Activated CD8-positive, alpha-beta T cell treated with anti-CD3 and anti-CD28 coated beads, Interleukin-2, amount 10 ng/mL, durations not matched to agents 7 days and 5 days (primary cell): ENCODE measurements at regions of chr16 and their contacts with region 1.

Region 1: DNA sequence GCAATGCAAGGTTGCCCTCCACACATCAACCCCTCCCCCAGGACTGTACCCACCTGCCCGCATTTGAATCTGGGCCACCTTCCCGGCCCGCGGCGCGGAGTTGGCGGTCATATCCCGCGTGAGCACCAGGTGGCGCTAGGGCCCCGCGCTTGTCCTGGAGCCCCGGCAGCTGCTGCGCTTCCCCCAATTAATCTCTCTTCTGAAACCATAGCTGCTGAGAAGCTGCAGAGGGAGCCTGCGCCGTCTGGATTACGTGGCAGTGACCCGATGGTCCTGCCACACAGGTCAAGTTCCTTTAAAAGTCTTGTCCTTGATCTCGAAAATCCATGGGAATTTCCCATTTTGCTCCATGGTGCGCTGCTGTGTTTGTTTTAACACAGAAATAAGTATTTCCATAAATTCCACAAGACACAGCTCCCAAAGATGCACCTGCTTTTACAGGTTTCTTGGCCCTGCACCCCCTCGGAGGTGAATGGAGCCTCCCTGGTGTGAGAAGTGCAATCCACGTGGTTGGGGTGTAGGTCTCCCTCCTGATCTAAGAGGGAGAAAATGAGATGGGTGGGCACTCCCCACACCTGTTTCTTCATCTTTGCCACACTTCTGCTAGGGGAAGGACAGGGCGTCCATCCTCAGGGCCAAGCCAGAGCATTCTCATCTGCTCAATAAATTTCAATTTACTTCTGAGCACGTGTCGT is 22.1 kb downstream of the COX4I1 start:
- DNase-seq: peak; percentile 84
- ATAC-seq: peak; percentile 83
- H3K4me3 Mint-ChIP-seq: no peak overlapping the region
- H3K27ac Mint-ChIP-seq: no peak overlapping the region
- H3K4me1 Mint-ChIP-seq: peaks cover 9% of the 10 kb centered on the region
- H3K27me3 Mint-ChIP-seq: peaks cover 3% of the 10 kb centered on the region

Region 2: GRCh38 chr16:85396879-85397871 is 424.4 kb before region 1 on chr16:
- CTCF ChIA-PET with region 1: no interaction called
- POLR2A ChIA-PET with region 1: no interaction called
- DNase-seq: no peak
- ATAC-seq: no peak
- H3K4me3 Mint-ChIP-seq: no peak overlapping the region
- H3K27ac Mint-ChIP-seq: no peak overlapping the region
- H3K4me1 Mint-ChIP-seq: peaks cover 2% of the 10 kb centered on the region
- H3K27me3 Mint-ChIP-seq: no peaks in the 10 kb centered on the region

Region 3: DNA sequence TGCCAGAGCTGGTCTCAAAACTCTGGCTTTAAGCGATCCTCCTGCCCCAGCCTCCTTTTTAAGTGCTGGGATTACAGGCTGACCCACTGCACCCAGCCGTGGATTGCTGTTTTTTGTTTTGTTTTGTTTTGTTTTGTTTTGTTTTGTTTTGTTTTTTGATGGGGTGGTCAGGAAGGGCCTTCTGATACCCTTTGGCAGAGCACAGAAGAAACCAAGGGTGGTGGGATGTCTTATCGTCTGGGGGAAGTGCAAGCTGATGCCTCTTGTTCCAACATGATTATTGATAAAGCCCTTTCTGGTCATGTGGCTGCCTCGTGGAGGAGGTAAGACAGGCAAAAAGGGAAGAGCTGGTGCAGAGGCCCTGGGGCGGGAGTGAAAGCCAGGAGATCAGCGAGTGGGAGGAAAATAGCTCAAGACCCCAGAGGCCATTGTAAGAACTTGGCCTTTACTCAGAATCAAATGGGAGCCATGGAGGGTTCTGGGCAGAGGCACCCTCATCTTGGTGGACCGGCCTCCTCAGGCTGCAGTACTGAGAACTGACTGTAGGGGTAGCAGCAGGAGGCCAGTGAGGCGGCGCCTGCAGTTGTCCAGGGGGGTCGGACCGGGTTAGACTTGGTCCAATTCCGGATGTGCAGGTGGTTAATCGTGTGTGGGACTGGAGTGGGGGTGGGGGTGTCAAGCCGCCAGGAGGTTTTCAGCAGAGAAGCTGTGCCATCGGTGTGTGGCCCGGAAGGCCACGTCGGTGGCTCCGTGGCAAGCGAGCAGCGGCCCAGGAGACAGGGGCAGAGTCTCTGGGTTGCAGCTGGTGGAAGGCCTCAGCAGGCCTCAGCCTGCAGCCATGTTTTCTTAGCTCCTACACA is 292.8 kb before region 1 on chr16:
- CTCF ChIA-PET with region 1: no interaction called
- POLR2A ChIA-PET with region 1: no interaction called
- DNase-seq: peak; percentile 32
- ATAC-seq: no peak
- H3K4me3 Mint-ChIP-seq: no peak overlapping the region
- H3K27ac Mint-ChIP-seq: no peak overlapping the region
- H3K4me1 Mint-ChIP-seq: no peaks in the 10 kb centered on the region
- H3K27me3 Mint-ChIP-seq: no peaks in the 10 kb centered on the region

Region 4: GRCh38 chr16:85799497-85800337 is 21.9 kb before region 1 on chr16 and contains the starts of genes COX4I1 and EMC8:
- CTCF ChIA-PET with region 1: interaction called, 19 read pairs
- POLR2A ChIA-PET with region 1: no interaction called
- DNase-seq: peak; percentile 95
- ATAC-seq: peak; percentile 91
- H3K4me3 Mint-ChIP-seq: peak within 1 kb of the TSS; percentile 90
- H3K27ac Mint-ChIP-seq: peak within 1 kb of the TSS; percentile 89
- H3K4me1 Mint-ChIP-seq: peaks cover 61% of the 10 kb centered on the region
- H3K27me3 Mint-ChIP-seq: no peaks in the 10 kb centered on the region
- total RNA-seq, gene COX4I1: 505 to 520 TPM
- total RNA-seq, gene EMC8: 33.3 to 43.0 TPM

Region 5: GRCh38 chr16:85898521-85899442 is 77.2 kb after region 1 on chr16 and contains the start of gene IRF8:
- CTCF ChIA-PET with region 1: interaction called, 69 read pairs
- POLR2A ChIA-PET with region 1: interaction called, 4 read pairs
- DNase-seq: peak; percentile 84
- ATAC-seq: peak; percentile 85
- H3K4me3 Mint-ChIP-seq: peak within 1 kb of the TSS; percentile 88
- H3K27ac Mint-ChIP-seq: peak within 1 kb of the TSS; percentile 76
- H3K4me1 Mint-ChIP-seq: peaks cover 50% of the 10 kb centered on the region
- H3K27me3 Mint-ChIP-seq: peaks cover 8% of the 10 kb centered on the region
- total RNA-seq, gene IRF8: 22.9 to 24.0 TPM

Region 6: DNA sequence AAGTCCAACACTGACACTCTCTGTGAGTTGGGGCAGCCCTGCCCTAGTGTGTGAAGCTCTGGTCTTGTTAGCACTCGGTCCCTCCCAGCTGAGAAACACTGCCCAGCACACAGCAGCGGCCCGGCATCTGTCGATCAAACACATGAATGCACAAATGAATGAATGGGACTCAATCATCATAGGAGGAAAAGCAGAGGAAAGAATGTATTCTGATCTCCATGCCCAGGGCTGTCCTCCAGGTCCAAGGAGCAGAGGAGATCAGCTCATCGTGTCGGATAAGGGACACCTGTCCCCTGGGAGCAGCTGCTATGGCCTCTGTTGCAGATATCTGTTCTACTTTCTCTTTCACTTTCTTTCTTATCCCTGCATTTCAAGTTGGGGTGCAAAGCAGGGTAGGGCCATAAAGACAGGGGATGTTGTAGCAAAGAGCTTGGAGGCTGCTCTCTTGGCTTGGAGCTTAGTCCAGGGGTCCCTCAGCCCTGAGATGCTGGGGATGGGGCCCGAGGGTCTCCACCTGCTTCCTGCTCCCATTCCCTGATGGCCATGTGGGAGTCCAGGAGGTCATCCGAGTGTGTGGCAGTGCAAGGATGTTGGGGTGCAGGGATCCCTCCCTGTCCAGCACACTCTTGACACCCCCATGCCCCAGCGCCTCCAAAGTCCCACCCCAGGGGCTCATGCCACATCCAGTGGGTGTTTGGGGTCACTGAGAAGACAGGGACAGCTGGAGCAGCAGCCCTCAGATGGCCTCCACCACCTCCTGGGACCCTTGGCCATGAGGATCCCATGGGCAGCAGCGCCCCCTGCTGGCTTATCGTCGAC is 165.6 kb after region 1 on chr16:
- CTCF ChIA-PET with region 1: interaction called, 385 read pairs
- POLR2A ChIA-PET with region 1: interaction called, 14 read pairs
- DNase-seq: peak; percentile 50
- ATAC-seq: peak; percentile 51
- H3K4me3 Mint-ChIP-seq: no peak overlapping the region
- H3K27ac Mint-ChIP-seq: peak overlapping the region; percentile 69
- H3K4me1 Mint-ChIP-seq: peaks cover 55% of the 10 kb centered on the region
- H3K27me3 Mint-ChIP-seq: no peaks in the 10 kb centered on the region

Region 7: DNA sequence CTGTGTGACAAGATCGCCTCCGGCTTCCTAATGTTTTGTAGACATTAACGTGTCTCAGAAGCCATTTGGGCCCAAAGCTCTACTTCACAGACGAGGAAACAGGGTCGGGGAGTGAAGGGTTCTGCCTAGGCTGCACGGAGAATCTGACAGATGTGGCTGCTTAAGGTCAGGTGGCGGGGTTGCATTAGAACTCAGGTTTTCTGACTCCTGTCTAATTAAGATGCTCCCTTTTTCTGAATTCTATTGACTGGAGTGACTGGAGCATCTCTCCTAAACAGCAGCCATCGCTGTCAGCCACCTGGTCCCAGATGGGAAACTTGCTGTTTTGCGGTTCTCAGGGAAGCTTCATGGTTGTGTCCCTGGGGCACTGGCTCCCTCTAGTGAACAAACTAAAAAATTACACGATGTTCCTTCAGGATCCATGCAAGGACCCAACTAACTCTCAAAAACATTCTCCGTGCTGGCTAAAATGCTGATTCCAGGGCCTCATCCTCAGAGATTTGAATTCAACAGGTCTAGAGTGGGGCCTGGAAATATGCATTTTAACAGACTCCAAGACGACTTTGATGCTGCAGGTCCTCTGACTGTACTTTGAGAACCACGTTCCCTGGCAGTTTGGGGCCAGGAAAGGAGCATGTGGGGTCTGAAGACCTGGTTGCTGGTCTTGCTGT is 194.7 kb after region 1 on chr16:
- CTCF ChIA-PET with region 1: interaction called, 222 read pairs
- POLR2A ChIA-PET with region 1: interaction called, 3 read pairs
- DNase-seq: peak; percentile 50
- ATAC-seq: no peak
- H3K4me3 Mint-ChIP-seq: no peak overlapping the region
- H3K27ac Mint-ChIP-seq: no peak overlapping the region
- H3K4me1 Mint-ChIP-seq: peaks cover 16% of the 10 kb centered on the region
- H3K27me3 Mint-ChIP-seq: peaks cover 30% of the 10 kb centered on the region